AG04450 (cell line): ENCODE measurements at regions of chr2 and their contacts with region 1.

Region 1: DNA sequence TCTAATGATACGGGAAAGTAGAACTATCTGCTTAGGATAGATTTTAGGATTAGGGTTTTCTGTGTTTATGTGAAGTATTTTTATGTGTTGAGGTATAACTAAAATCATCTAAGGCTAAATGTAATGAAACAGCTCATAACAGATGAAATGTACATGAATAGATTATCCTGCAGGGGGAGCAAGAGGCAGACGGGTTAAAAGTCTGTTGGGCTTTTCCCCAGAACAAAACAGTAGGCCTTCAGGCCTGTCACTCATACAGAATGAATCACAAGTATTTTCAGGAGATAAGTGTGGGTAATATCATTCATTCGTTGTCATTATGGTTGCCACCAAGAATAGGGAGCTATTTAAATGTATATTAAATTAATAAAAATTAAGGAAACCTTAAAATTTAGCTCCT is 107.9 kb upstream of the IL1R2 start:
- DNase-seq: peak; percentile 10
- H3K4me3 ChIP-seq: no peak overlapping the region
- H3K27ac ChIP-seq: no peak overlapping the region
- H3K27me3 ChIP-seq: no peaks in the 10 kb centered on the region
- CTCF ChIP-seq: peak; percentile 70

Region 2: GRCh38 chr2:101846973-101847372 is 36.9 kb before region 1 on chr2:
- CTCF ChIA-PET with region 1: interaction called, 12 read pairs
- POLR2A ChIA-PET with region 1: no interaction called
- DNase-seq: no peak
- H3K4me3 ChIP-seq: no peak overlapping the region
- H3K27ac ChIP-seq: no peak overlapping the region
- H3K27me3 ChIP-seq: no peaks in the 10 kb centered on the region
- CTCF ChIP-seq: no peak

Region 3: DNA sequence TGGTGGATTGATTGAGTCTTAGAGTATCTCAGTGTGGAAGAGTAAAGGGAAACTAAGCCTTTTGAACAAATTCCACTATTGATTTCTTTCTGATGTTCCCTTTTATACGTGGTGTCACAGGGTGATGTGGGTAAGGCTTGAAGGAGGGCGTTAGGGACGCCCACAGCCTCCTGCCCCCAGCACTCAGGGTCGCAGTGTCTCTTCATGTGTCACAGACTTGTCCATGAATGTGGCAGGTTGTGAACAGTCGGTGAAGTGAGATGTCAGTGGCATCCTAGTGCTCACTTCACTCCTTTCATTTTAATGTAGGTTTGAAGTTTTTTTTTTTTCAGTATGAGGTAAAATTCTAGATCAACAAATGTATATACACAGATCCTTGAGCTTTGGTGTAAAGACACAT is 15.3 kb before region 1 on chr2:
- CTCF ChIA-PET with region 1: interaction called, 23 read pairs
- POLR2A ChIA-PET with region 1: interaction called, 3 read pairs
- DNase-seq: no peak
- H3K4me3 ChIP-seq: no peak overlapping the region
- H3K27ac ChIP-seq: no peak overlapping the region
- H3K27me3 ChIP-seq: no peaks in the 10 kb centered on the region
- CTCF ChIP-seq: no peak

Region 4: DNA sequence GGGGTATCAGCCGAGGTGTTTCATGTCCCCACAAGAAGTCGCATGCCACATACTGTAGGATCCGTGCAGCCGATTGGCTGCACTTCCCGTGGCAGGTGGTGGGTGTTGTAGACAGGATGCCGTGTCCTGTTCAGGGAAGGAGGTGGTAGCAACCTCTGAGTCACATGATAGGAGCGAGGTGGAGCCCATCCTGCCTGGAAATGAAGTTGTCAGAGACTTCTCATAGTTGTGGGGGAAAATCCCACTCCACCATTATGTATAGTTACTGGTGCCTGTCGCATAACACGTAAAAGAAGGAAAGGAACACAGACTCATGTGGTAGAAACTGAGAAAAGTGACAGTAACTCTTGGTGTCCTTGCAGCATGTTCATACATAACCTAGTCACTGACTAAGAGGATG is 16.5 kb after region 1 on chr2:
- CTCF ChIA-PET with region 1: interaction called, 43 read pairs
- POLR2A ChIA-PET with region 1: no interaction called
- DNase-seq: no peak
- H3K4me3 ChIP-seq: no peak overlapping the region
- H3K27ac ChIP-seq: no peak overlapping the region
- H3K27me3 ChIP-seq: no peaks in the 10 kb centered on the region
- CTCF ChIP-seq: no peak

Region 5: DNA sequence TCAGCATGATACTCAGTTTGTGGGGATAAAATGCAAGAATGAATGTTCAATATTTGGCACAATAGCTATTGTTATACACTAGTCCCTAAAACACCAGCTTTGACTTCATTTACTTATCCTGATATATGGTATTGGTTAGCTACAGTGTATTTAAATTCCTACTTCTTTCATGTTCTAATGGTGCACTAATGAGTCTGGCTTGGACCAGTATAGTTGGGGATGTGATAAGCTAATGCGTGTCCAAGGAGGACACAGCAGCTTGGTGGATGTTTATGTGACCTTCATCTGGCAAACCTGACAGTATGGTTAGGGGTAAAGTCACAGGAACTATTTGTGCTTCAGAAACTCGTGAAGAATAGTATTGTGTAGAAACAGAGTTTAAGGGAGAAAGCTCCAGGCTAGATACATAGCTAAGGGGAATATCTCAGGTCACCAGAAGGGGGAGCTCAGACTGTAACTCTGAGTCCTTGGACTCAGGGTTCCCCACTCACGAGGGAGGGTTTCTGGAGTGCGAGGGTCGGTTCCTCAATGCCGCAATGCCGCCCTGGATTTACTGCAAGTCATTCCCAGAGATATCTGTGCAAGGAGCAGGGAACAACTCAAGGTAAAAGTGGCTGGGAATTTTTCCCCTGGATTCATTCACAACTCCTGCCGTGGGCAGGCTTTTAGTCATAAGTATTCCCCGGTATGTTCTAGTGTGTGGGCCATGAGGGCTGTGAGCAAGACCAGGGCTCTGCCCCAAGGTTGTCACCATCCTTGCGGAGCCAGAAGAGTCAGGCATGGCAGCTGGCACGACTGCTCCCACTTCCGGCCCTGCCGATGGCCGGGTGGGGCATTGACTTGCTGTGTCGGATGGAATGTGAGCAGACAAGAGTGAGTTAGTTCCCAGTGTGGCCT is 122.4 kb after region 1 on chr2:
- CTCF ChIA-PET with region 1: interaction called, 21 read pairs
- POLR2A ChIA-PET with region 1: no interaction called
- DNase-seq: no peak
- H3K4me3 ChIP-seq: no peak overlapping the region
- H3K27ac ChIP-seq: no peak overlapping the region
- H3K27me3 ChIP-seq: peaks cover 9% of the 10 kb centered on the region
- CTCF ChIP-seq: peak; percentile 76

Region 6: DNA sequence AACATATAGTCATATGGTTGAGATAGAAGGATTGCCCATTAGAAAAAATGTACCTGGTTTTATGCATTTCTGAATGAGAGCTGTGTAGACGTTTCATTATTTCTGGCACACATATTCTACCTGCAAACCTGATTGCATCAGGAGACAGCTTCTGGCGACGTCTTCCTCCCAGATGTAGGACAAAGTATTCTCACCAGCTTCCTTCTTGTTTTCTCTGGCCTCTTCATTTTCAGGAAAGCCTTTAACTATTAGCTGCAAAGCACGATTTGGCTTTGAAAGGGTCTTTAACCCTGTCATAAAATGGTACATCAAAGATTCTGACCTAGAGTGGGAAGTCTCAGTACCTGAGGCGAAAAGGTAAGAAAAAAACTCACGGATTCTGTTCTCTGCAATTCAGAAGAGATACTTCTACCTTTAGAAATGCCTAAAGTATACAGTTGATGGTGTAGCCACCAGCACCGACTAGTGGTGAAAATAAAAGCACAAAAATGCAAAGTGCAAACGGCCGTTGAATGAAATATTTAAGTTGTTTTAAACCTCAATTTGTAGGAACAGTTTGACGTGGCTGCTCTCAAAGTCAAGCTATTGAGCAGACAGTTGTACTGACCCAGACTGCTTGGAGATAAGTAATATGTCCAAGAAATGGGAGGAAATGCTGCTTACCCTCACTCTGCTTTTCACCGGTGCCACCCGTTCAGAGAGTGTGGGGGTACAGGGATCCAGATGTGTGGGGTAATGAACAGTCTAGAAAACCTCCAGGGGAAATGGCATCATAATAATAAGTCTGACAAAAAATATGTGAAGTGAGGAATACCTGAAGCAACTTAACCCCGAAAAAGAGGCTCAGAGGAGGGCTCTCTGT is 559.3 kb after region 1 on chr2:
- CTCF ChIA-PET with region 1: interaction called, 33 read pairs
- POLR2A ChIA-PET with region 1: no interaction called
- DNase-seq: no peak
- H3K4me3 ChIP-seq: no peak overlapping the region
- H3K27ac ChIP-seq: no peak overlapping the region
- H3K27me3 ChIP-seq: no peaks in the 10 kb centered on the region
- CTCF ChIP-seq: peak; percentile 87